H1 (cell line): ENCODE measurements at regions of chr6 and their contacts with region 1.

Region 1: DNA sequence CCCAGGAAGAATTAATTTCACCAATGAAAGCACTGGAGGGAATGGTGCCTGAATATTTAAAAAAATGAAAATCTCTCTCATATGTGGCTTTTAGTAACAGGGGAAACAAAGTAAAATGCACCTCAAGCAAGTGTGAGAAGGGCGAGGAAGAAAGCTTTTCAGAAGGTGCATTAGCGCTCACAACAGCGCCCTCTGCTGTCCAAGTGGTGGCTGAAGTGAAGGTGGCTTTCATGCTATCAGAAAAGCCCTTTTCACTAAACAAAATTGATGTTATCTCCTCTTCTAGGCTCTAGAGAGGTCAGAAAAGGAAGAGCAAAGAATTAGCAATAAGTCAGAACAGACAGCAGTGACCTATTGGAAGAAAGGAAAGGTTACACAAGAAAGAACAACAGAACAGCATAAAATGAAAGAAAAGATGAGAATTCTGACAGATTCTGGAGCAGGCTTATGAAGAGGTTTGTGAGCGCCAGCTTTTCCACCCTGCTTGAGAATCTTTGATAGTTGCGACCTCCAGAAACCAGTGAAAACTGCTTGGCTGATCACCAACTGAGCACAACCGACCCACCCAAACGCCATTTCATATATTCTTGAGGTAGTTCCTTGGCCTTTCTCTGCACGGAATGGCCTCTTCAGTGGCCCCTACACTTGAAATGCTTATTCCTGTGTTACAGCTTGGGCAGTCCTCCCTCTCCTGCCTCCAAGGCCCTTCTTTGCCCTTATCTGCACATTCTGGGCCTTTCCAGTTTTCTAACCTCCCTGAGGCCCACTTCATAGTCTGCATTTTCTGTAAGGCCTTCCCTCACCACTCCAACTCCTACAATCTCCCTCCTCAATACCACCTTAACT is 45.3 kb downstream of the SMLR1 start:
- DNase-seq: peak in 1 of 2 experiments; percentile 85
- H3K4me3 ChIP-seq: no peak overlapping the region
- H3K27ac ChIP-seq: no peak overlapping the region
- H3K4me1 ChIP-seq: no peaks in the 10 kb centered on the region; a peak in 1 of 7 replicates
- H3K27me3 ChIP-seq: no peaks in the 10 kb centered on the region
- CTCF ChIP-seq: peak; percentile 65 to 90 (median 80)
- EP300 ChIP-seq: no peak
- POLR2A ChIP-seq: no peak
- RAD21 ChIP-seq: peak; percentile 66 to 70; a peak in 3 of 4 replicates

Region 2: DNA sequence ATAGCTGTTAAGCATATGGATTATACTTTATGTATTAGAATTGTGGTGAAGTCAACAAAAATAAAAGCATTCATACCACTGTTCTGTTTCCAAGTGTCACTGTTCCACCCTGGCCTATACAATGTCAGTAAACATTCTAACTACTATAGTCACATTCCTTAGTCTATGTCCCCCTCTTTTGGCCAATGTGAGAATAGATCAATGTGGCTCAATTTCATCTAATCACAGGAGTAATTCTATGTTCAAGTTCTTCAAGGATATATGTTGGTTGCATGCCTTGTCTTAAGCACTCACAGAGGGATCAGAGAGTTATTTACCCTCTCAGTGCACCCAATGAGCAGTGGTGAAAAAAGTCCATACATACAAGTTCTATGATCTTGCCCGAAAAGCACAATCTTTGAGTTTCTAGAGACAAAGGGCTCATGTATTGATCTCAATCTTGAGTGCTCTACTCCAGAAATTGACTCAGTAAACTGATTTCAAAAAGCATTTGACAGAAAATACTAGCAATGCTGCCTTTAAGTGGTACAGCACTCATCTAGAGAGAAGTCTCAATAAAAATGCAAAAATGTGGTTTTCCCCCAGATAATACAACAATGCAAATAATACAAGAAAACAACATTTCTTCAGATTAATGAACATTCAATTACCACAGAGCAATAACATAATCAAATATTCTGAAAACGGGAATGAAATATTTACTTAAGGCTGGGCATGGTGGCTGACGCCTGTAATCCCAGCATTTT is 28.7 kb before region 1 on chr6:
- CTCF ChIA-PET with region 1: interaction called, 20 read pairs
- POLR2A ChIA-PET with region 1: no interaction called
- DNase-seq: no peak
- H3K4me3 ChIP-seq: no peak overlapping the region
- H3K27ac ChIP-seq: no peak overlapping the region
- H3K4me1 ChIP-seq: peaks cover 4 to 11% (median 6%) of the 10 kb centered on the region in 4 experiments; a peak in 6 of 7 replicates
- H3K27me3 ChIP-seq: no peaks in the 10 kb centered on the region
- CTCF ChIP-seq: peak in 2 of 3 experiments; percentile 53 to 77; a peak in 2 of 4 replicates
- EP300 ChIP-seq: no peak
- POLR2A ChIP-seq: no peak
- RAD21 ChIP-seq: peak; percentile 88 to 90

Region 3: GRCh38 chr6:130858498-130859160 is 13.8 kb before region 1 on chr6:
- CTCF ChIA-PET with region 1: interaction called, 25 read pairs
- POLR2A ChIA-PET with region 1: no interaction called
- DNase-seq: no peak
- H3K4me3 ChIP-seq: no peak overlapping the region
- H3K27ac ChIP-seq: no peak overlapping the region
- H3K4me1 ChIP-seq: peaks cover 0 to 6% (median 2%) of the 10 kb centered on the region in 4 experiments; a peak in 5 of 7 replicates
- H3K27me3 ChIP-seq: peaks cover 0 to 1% (median 0%) of the 10 kb centered on the region in 4 experiments; a peak in 1 of 7 replicates
- CTCF ChIP-seq: no peak
- EP300 ChIP-seq: no peak
- POLR2A ChIP-seq: no peak
- RAD21 ChIP-seq: no peak

Region 4: GRCh38 chr6:131013495-131013894 is 141.0 kb after region 1 on chr6:
- CTCF ChIA-PET with region 1: no interaction called
- POLR2A ChIA-PET with region 1: no interaction called
- DNase-seq: no peak
- H3K4me3 ChIP-seq: no peak overlapping the region
- H3K27ac ChIP-seq: no peak overlapping the region
- H3K4me1 ChIP-seq: peaks cover 0 to 3% (median 2%) of the 10 kb centered on the region in 4 experiments; a peak in 1 of 7 replicates
- H3K27me3 ChIP-seq: no peaks in the 10 kb centered on the region
- CTCF ChIP-seq: no peak
- EP300 ChIP-seq: no peak
- POLR2A ChIP-seq: no peak
- RAD21 ChIP-seq: no peak